Calu3 (cell line): ENCODE measurements at regions of chr7 and their contacts with region 1.

Region 1: GRCh38 chr7:40666848-40667247 is 532.0 kb downstream of the SUGCT start:
- DNase-seq: no peak
- H3K4me3 Mint-ChIP-seq: no peak overlapping the region
- H3K27ac Mint-ChIP-seq: no peak overlapping the region
- H3K4me1 Mint-ChIP-seq: no peaks in the 10 kb centered on the region
- H3K27me3 Mint-ChIP-seq: no peaks in the 10 kb centered on the region
- CTCF ChIP-seq: no peak

Region 2: GRCh38 chr7:41093141-41093540 is 426.3 kb after region 1 on chr7:
- CTCF ChIA-PET with region 1: no interaction called
- intact Hi-C with region 1: loop called (anchors 5 kb)
- DNase-seq: no peak
- H3K4me3 Mint-ChIP-seq: no peak overlapping the region
- H3K27ac Mint-ChIP-seq: no peak overlapping the region
- H3K4me1 Mint-ChIP-seq: no peaks in the 10 kb centered on the region
- H3K27me3 Mint-ChIP-seq: no peaks in the 10 kb centered on the region
- CTCF ChIP-seq: no peak

Region 3: GRCh38 chr7:41403291-41403690 is 736.4 kb after region 1 on chr7:
- CTCF ChIA-PET with region 1: no interaction called
- intact Hi-C with region 1: no loop called
- DNase-seq: no peak
- H3K4me3 Mint-ChIP-seq: no peak overlapping the region
- H3K27ac Mint-ChIP-seq: no peak overlapping the region
- H3K4me1 Mint-ChIP-seq: peaks cover 20% of the 10 kb centered on the region
- H3K27me3 Mint-ChIP-seq: no peaks in the 10 kb centered on the region
- CTCF ChIP-seq: no peak